Posterior vena cava (tissue), 2 donors: ENCODE measurements at regions of chr3 and their contacts with region 1.

Region 1: DNA sequence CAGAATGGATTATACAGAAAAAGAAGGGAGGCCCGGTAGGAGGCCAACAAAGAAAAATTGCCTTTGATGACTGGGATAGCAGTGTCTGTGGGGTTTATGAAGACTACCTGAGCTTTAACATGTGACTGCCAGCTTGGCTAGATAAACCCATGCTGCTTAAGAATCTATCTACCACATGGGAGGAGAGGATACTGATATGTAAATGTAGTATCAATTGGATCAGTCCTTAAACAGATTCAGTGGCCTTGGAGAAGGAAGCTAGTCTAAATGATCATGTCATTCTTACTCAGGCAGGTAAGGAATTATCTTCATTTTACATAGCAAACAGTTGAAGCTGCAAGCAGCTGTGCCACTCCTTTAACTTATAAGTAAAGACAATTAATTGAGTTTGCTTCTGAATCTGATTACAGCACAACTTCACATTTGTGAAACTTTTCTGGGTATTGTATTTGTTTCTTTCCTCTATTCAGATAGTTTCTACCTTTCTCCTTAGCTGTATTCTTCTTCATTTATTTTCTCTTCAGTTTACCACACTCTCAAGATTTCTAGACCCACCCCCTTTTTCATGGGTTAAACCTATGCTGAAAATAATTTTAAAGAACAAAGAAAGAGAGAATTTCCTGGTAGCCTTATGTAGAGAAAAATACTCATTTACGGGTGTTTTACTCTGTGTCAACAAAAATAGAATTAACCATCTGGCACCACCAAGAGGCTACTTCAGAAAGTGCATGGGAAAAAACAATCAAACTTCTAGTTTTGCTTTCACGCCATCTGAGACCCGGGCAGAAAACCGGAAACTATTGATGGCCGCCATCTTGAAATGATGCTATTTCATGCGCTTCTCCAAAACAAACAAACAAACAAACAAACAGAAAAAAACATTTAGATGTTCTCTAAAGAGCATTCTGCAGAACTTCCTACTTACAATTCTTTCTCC is 49.8 kb upstream of the SYNPR start:
- DNase-seq: no peak

Region 2: DNA sequence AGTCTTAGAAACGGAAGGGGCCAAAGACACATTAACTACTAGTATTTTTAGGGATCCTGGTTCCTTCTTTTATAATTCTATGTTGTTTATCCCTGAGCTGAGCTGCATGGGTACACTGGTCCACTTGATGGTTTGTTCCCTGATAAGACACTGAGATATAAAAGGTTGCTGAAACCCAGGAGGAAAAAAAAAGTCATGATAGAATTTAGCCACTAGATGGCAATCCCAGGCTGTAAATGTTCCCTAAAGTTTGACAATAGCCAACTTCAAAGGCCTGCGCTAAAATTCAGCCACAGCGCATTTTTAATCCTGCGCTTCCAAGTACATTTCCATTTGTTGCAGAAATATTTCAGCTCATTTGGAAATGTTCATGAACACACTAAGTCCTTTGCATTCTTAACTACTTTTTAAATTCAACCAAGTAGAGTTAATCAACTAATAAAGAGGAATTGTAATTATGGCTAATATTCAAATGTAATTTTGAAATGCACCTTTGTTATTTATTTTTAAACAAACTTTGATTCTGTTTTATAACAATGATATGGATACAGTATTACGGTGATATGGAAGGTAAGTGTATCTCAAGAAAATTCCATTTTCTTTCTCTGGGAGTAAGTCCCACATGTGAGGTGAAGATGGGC is 605.7 kb before region 1 on chr3:
- intact Hi-C with region 1: loop called in 1 of 2 experiments (anchors 10 kb)
- DNase-seq: no peak